ENCODE measurements at regions of chr6 and their contacts with region 1.

Region 1: GRCh38 chr6:70413114-70413991 is at the start of gene FAM135A:
- DNase-seq: peak; percentile 96

Region 2: DNA sequence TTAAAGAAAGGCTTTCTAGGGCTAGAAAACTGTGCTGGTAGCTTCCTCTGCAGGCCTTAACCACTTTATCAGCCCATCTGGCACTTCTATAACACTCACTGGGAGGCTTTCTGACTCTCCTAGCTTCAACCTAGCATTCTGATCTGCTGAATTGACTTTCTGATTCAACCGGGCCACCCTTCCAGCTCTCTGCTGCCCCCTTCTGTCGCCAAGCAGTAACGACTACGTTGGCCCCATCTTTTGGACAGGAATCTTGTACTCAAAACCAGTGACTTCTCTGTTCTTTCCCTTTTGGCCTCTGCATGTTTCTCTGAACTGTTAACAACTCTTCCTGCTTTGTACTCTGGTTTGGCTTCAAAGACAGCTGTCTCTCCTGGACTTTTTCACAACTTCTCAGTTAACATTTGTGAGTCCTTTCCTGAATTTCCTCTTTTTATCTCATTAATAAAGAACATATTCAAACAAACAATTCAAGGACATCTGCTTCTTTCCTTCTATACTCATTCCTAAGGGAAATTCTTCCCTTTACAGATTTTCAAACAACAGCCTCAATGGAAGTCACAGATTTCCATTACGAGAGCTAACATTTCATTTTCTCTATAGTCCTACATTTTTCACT is 43.9 kb before region 1 on chr6:
- CTCF ChIA-PET with region 1: interaction called, 4 read pairs
- POLR2A ChIA-PET with region 1: interaction called, 13 read pairs
- DNase-seq: peak; percentile 74

Region 3: DNA sequence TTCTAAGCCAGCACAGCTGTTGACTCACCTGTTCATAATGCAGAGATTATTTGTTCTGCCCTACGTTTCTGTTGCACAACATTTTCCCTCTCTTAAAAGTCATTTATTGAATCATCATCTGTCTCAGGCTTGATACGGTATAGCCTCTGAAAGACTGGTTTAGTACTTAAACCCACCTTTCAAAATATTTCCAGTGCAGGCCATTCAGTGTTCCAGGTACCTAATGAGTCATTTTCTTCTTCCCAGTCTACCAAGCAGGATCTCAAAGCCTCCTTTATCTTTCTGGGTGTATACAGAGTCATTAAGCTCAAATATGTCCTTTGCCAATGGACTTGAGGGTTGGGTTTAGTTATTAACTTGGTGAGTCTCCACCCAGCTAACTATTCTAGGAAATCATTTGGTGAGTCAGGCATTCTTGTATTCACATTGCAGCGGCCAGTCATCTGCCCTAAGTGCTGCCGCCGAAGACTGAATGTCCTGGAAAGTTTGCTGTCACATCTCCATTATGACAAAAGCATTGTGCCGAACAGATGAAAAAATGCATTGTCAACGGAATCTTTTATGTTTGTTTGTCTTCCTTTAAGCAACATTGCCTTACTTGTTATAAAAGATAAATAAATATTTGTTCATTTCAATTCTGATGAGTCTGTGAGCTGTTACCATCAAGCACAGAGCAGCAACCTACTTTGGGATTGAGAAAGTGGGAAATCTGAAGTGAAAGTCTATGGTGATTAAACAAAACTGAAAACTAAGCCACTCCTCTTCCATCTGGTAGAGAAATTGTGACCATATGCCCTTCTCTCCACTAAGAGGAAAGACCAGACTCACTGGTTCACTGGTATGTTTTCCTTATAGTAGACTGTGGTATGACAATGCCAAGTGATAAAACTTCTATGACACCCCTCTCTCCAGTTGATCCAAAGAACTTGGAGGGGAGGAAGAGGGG is 14.3 kb before region 1 on chr6:
- CTCF ChIA-PET with region 1: no interaction called
- POLR2A ChIA-PET with region 1: interaction called, 12 read pairs
- DNase-seq: no peak

Region 4: GRCh38 chr6:70423189-70424134 is 10.1 kb after region 1 on chr6:
- CTCF ChIA-PET with region 1: no interaction called
- POLR2A ChIA-PET with region 1: interaction called, 10 read pairs
- DNase-seq: no peak

Region 5: GRCh38 chr6:70622461-70622860 is 209.1 kb after region 1 on chr6:
- CTCF ChIA-PET with region 1: no interaction called
- POLR2A ChIA-PET with region 1: no interaction called
- DNase-seq: no peak